Heart right ventricle (tissue), 16 donors: ENCODE measurements at regions of chr12 and their contacts with region 1.

Region 1: DNA sequence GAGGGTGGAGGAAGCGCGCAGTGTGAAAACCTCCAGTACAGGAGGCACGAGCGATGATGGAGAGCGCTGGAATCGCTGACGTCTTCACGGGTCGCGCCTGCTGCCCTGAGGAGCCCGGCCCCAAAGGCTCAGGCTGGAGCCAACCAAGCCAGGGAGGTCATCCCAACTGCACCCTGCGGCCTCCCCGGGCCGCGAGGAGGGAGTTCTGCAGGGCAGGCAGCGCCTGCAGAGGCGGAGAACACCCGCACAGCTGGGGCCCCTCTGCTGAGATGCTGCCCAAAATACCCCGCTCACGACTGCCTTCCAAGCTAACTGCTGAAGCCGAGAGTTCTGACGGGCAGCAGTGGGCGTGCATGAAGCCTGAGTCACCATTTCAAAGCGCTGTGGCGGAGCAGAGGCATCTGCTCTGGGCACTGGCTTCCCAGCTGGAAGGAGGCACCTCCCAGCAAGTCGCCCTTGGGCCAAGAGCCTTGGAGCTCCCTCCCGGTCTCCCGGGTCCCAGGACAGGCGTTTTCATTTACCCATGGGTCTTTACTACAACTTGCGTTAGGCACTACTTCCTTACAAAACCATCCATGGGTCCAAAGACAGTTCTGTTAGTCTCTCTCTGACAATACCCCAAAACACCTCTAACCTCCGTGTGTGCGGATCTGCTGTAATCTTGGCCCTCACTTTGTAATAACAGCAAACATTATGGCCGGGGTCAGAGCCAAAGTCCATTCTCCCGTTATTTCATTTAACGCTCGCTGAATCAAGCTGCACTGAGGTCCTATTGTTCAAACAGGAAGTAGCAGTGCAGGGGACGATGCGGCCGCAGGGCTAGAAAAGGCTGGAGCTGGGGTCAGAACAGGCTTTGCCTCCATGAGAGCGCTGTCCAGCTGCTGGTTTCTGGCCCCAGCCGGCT is 60.1 kb upstream of the RIMBP2 start:
- DNase-seq: peak; percentile 29 to 36
- ATAC-seq: peak; percentile 53 to 86 (median 75)
- H3K4me3 ChIP-seq: peak overlapping the region in 7 of 10 donors; percentile 5 to 49 (median 36)
- H3K27ac ChIP-seq: no peak overlapping the region
- H3K4me1 ChIP-seq: peaks cover 3 to 17% (median 14%) of the 10 kb centered on the region in 9 donors
- H3K27me3 ChIP-seq: peaks cover 0 to 34% (median 17%) of the 10 kb centered on the region in 7 donors
- CTCF ChIP-seq: no peak

Region 2: DNA sequence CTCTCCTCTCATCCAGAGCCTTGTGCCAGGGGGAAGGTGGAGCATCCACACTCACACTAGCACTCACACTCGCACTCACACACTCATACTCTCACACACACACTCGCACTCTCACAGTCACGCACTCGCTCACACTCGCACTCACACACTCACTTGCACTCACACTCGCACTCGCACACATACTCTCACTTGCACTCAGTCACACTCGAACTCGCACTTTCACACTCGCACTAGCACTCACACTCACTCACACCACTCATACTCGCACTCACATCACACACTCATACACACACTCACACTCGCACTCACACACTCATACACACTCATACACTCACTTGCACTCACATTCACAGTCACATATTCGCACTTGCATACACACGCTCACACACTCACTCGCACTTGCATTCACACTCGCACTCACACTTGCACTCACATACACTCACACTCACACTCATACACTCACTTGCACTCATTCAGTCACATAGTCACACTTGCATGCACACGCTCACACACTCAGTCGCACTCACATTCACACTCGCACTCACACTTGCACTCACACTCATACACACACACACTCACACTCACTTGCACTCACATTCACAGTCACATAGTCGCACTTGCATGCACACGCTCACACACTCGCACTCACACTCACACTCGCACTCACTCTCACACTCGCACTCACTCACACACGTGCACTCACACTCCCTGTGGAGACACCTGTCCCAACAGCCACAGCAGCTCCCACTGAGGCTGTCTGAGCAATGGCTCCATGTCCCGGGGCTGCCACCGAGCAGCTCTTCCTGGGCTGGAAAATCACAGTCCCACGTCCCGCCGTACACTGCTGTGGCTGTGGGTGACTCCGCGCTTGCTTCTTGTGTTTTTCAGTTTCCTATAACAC is 47.8 kb before region 1 on chr12:
- intact Hi-C with region 1: no loop called
- DNase-seq: no peak
- ATAC-seq: no peak
- H3K4me3 ChIP-seq: no peak overlapping the region
- H3K27ac ChIP-seq: no peak overlapping the region
- H3K4me1 ChIP-seq: no peaks in the 10 kb centered on the region
- H3K27me3 ChIP-seq: peaks cover 0 to 33% (median 19%) of the 10 kb centered on the region in 7 donors
- CTCF ChIP-seq: no peak

Region 3: DNA sequence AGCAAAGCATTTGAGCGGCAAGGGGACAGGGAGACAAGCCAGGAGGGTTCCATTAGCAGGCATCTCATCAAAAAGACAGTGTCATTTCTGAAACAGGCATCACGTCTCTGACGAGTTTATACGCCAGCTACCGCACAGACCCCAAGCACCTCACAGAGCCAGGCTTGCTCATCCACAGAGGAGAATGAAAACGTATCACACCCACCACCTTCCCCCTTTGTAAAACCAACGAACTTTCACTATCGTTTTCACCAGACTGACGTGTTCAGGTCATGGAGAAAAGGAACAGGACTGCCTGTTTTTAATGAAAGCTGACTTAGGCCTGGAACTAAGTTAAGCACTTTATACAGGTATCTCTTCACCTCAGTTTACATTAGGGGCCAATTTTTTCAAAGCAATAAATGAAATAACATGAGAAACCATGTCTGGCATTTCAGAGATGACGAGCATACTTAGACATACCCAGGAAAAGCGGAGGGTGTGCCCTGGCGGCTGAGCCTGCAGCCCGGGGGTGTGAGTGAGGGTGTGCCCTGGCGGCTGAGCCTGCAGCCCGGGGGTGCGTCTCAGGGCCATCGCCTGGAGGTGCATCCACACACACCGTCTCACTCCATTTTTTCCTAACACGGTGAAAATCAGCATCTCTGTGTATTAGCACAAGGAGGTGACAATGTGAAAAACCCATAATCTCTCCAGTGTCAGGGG is 20.9 kb after region 1 on chr12:
- intact Hi-C with region 1: loop called in 1 of 10 experiments (anchors 2 kb)
- DNase-seq: no peak
- ATAC-seq: no peak
- H3K4me3 ChIP-seq: no peak overlapping the region
- H3K27ac ChIP-seq: peak overlapping the region in 1 of 10 donors; percentile 5
- H3K4me1 ChIP-seq: no peaks in the 10 kb centered on the region
- H3K27me3 ChIP-seq: no peaks in the 10 kb centered on the region
- CTCF ChIP-seq: no peak

Region 4: GRCh38 chr12:130813436-130813835 is 37.2 kb after region 1 on chr12:
- intact Hi-C with region 1: loop called in 1 of 10 experiments (anchors 1 kb)
- DNase-seq: no peak
- ATAC-seq: no peak
- H3K4me3 ChIP-seq: no peak overlapping the region
- H3K27ac ChIP-seq: no peak overlapping the region
- H3K4me1 ChIP-seq: peaks cover 0 to 3% (median 2%) of the 10 kb centered on the region in 9 donors
- H3K27me3 ChIP-seq: no peaks in the 10 kb centered on the region
- CTCF ChIP-seq: no peak